Left ventricle myocardium inferior (tissue), 1 donor: ENCODE measurements at regions of chr15 and their contacts with region 1.

Region 1: GRCh38 chr15:61069394-61070075 is 159.6 kb downstream of the RORA start:
- DNase-seq: no peak
- H3K4me3 ChIP-seq: no peak overlapping the region
- H3K27ac ChIP-seq: peak overlapping the region; percentile 16
- H3K4me1 ChIP-seq: peaks cover 14% of the 10 kb centered on the region
- H3K27me3 ChIP-seq: no peaks in the 10 kb centered on the region
- CTCF ChIP-seq: no peak

Region 2: GRCh38 chr15:61122647-61123375 is 53.3 kb after region 1 on chr15:
- intact Hi-C with region 1: loop called (anchors 10 kb)
- DNase-seq: no peak
- H3K4me3 ChIP-seq: no peak overlapping the region
- H3K27ac ChIP-seq: no peak overlapping the region
- H3K4me1 ChIP-seq: no peaks in the 10 kb centered on the region
- H3K27me3 ChIP-seq: no peaks in the 10 kb centered on the region
- CTCF ChIP-seq: no peak